ENCODE measurements at regions of chr15 and their contacts with region 1.

Region 1: DNA sequence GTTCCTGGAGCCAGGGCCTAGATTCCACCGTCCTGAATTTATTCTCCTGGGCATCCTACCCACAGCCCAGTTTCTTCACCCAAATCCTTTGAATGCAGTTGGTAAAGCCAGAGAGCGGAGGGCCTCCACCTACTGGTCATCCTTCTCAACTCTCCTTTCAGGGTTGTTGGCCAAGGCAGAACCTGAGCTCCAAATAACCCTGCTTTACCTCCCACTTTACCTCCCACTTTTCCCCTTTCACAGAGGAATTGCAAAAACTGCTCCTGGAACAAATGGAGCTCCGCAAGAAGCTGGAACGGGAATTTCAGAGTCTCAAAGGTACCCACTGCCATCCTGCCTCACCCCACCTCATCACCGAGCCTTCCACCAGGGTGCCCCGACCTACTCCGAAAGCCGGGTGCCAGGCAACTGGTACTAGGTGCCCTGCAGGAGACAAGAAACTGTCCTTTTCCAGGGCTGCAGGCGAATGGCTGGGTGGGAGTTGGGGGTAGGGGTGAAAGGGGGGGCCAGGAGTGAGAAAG is 6.8 kb downstream of the SKOR1 start:
- DNase-seq: peak; percentile 54
- ATAC-seq: peak; percentile 53
- H3K4me3 ChIP-seq: no peak overlapping the region
- H3K27ac ChIP-seq: no peak overlapping the region
- H3K4me1 ChIP-seq: no peaks in the 10 kb centered on the region; the same call in 1 of the 2 replicates
- H3K27me3 ChIP-seq: peaks cover 16% of the 10 kb centered on the region
- CTCF ChIP-seq: peak; percentile 51

Region 2: GRCh38 chr15:67456677-67457529 is 375.2 kb before region 1 on chr15:
- CTCF ChIA-PET with region 1: interaction called, 3 read pairs
- POLR2A ChIA-PET with region 1: no interaction called
- intact Hi-C with region 1: loop called (anchors 1 kb)
- DNase-seq: peak; percentile 82
- ATAC-seq: peak; percentile 91
- H3K4me3 ChIP-seq: no peak overlapping the region
- H3K27ac ChIP-seq: no peak overlapping the region
- H3K4me1 ChIP-seq: no peaks in the 10 kb centered on the region
- H3K27me3 ChIP-seq: no peaks in the 10 kb centered on the region
- CTCF ChIP-seq: peak; percentile 81

Region 3: GRCh38 chr15:67501177-67501835 is 330.8 kb before region 1 on chr15:
- CTCF ChIA-PET with region 1: interaction called, 9 read pairs
- POLR2A ChIA-PET with region 1: no interaction called
- intact Hi-C with region 1: loop called (anchors 1 kb)
- DNase-seq: peak; percentile 46
- ATAC-seq: peak; percentile 80
- H3K4me3 ChIP-seq: no peak overlapping the region
- H3K27ac ChIP-seq: no peak overlapping the region
- H3K4me1 ChIP-seq: no peaks in the 10 kb centered on the region
- H3K27me3 ChIP-seq: no peaks in the 10 kb centered on the region
- CTCF ChIP-seq: peak; percentile 54

Measured in PC-3 (cell line).